Motor neuron (in vitro differentiated cells): ENCODE measurements at regions of chr11 and their contacts with region 1.

Region 1: DNA sequence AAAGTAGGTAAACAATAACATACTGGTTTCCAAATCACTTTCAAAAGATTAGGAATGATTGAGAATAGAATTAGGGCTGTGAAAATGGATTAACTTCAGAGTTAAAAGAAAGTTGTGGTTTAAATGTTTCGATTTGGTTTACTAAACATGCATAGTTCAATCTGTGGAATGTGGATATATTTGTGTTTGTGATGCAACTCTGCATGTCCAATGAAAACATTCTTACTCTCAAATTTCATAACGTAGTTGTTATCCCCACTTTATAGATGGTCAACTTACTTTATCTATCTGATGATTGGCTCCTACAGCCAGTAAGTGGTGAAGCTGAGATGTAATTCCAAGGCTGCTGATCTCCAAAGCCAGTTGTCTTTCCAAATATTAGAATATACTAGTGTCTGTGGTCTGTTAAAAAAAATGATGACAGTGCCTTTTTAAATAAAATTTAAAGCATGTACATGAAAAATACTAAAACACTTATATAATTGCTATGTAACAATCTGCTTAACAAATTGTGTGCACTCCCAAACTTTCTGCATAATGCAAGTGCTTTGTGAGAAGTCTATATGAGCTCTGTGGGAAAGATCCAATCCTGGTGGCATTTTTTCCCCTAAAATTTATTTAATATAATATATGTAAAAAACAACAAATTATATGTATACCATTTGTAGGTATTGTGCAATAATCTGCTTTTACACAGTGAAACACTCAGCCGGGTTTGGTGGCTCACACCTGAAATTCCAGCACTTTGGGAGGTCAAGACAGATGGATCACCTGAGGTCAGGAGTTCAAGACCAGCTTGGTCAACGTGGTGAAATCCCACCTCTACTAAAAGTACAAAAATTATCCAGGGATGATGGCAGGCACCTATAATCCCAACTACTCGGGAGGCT is 9.7 kb upstream of the SIK3 start:
- ATAC-seq: peak in 3 of 8 experiments; percentile 35 to 77 (median 69)
- H3K4me3 ChIP-seq: no peak overlapping the region
- H3K27ac ChIP-seq: no peak overlapping the region
- H3K4me1 ChIP-seq: no peaks in the 10 kb centered on the region

Region 2: DNA sequence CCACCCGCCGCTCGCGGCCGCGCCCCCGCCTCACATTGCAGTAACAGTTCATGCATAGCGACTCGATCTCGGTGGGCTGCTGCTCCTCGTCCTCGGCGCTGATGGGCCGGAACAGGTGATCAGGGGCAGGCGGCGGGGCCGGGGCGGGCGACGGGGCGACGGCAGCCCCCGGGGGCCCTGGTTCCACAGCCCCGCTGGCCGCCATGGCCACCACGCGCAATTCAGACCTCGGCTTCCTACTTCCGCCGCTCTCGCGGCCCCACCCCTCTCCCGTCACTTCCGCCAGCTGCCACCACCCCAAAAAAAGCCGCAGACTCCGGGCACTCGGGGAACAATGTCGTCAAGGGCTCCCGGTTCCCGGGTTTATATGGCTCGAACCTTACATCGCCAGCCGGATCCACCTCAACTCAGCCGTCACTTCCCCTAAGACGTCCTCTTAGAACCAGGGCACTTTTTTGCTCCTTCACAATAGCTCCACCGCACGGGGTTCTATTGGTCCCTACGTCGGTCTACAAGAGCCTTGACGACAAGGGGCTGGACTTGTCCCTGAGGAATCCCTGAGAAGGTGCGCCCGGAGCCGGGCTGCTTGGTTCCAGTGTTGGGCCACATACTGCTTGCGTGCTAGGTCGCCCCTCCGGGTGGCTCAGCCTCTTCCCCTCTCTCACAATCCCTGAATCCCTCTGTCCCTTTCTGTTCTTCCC is 320.0 kb before region 1 on chr11 and contains the start of gene ZPR1:
- in situ Hi-C with region 1: loop called in 1 of 9 experiments (anchors 25 kb)
- ATAC-seq: peak; percentile 86 to 91 (median 88)
- H3K4me3 ChIP-seq: peak within 1 kb of the TSS; percentile 95 to 99 (median 98)
- H3K27ac ChIP-seq: peak within 1 kb of the TSS; percentile 67 to 88
- H3K4me1 ChIP-seq: peaks cover 8 to 13% of the 10 kb centered on the region in 2 donors
- total RNA-seq, gene ZPR1: 22.4 to 43.5 (median 33.0) TPM

Region 3: GRCh38 chr11:116808386-116809194 is 299.4 kb before region 1 on chr11:
- in situ Hi-C with region 1: loop called in 1 of 9 experiments (anchors 10 kb)
- ATAC-seq: no peak
- H3K4me3 ChIP-seq: no peak overlapping the region
- H3K27ac ChIP-seq: no peak overlapping the region
- H3K4me1 ChIP-seq: no peaks in the 10 kb centered on the region

Region 4: GRCh38 chr11:116879800-116880625 is 227.9 kb before region 1 on chr11:
- in situ Hi-C with region 1: loop called in 8 of 9 experiments (anchors 10 to 25 kb)
- ATAC-seq: peak; percentile 63 to 100 (median 88)
- H3K4me3 ChIP-seq: no peak overlapping the region
- H3K27ac ChIP-seq: no peak overlapping the region
- H3K4me1 ChIP-seq: peaks cover 0 to 3% of the 10 kb centered on the region in 2 donors

Region 5: GRCh38 chr11:117327567-117328374 is 219.8 kb after region 1 on chr11 and contains the start of gene CEP164:
- in situ Hi-C with region 1: no loop called
- ATAC-seq: peak; percentile 86 to 96 (median 96)
- H3K4me3 ChIP-seq: peak within 1 kb of the TSS; percentile 54 to 86 (median 81)
- H3K27ac ChIP-seq: peak within 1 kb of the TSS; percentile 67 to 78
- H3K4me1 ChIP-seq: peaks cover 5 to 7% of the 10 kb centered on the region in 2 donors
- total RNA-seq, gene CEP164: 13.3 to 118 (median 25.7) TPM